Naive thymus-derived CD8-positive, alpha-beta T cell (primary cell): ENCODE measurements at regions of chr1 and their contacts with region 1.

Region 1: GRCh38 chr1:15578921-15579682 is 5.7 kb downstream of the AGMAT start:
- DNase-seq: peak; percentile 11 to 79 (median 48)
- ATAC-seq: peak; percentile 90 to 97
- H3K4me3 Mint-ChIP-seq: peak overlapping the region; percentile 60 to 82 (median 74)
- H3K27ac Mint-ChIP-seq: peak overlapping the region; percentile 95 to 98 (median 97)
- H3K4me1 Mint-ChIP-seq: peaks cover 20 to 61% (median 48%) of the 10 kb centered on the region in 4 donors
- H3K27me3 Mint-ChIP-seq: no peaks in the 10 kb centered on the region

Region 2: GRCh38 chr1:15475752-15476314 is 103.3 kb before region 1 on chr1 and contains the start of gene CELA2B:
- POLR2A ChIA-PET with region 1: no interaction called
- DNase-seq: no peak
- ATAC-seq: no peak
- H3K4me3 Mint-ChIP-seq: peak within 1 kb of the TSS in 1 of 10 donors; percentile 24
- H3K27ac Mint-ChIP-seq: no peak within 1 kb of the TSS
- H3K4me1 Mint-ChIP-seq: no peaks in the 10 kb centered on the region
- H3K27me3 Mint-ChIP-seq: no peaks in the 10 kb centered on the region
- polyA plus RNA-seq, gene CELA2B: not detected

Region 3: GRCh38 chr1:15526490-15527339 is 52.4 kb before region 1 on chr1 and contains the start of gene DNAJC16:
- POLR2A ChIA-PET with region 1: interaction called, 20 read pairs
- DNase-seq: peak; percentile 77 to 99 (median 96)
- ATAC-seq: peak; percentile 42 to 59
- H3K4me3 Mint-ChIP-seq: peak within 1 kb of the TSS; percentile 87 to 97 (median 92)
- H3K27ac Mint-ChIP-seq: peak within 1 kb of the TSS; percentile 89 to 100 (median 100)
- H3K4me1 Mint-ChIP-seq: peaks cover 32 to 63% (median 50%) of the 10 kb centered on the region in 4 donors
- H3K27me3 Mint-ChIP-seq: peaks cover 0 to 2% (median 0%) of the 10 kb centered on the region in 5 donors
- polyA plus RNA-seq, gene DNAJC16: 5.0 to 9.7 (median 7.1) TPM

Region 4: GRCh38 chr1:15603050-15603965 is 24.2 kb after region 1 on chr1:
- POLR2A ChIA-PET with region 1: interaction called, 25 read pairs
- DNase-seq: peak; percentile 84 to 97 (median 92)
- ATAC-seq: peak; percentile 98 to 99
- H3K4me3 Mint-ChIP-seq: peak overlapping the region; percentile 78 to 92 (median 84)
- H3K27ac Mint-ChIP-seq: peak overlapping the region; percentile 75 to 94 (median 90)
- H3K4me1 Mint-ChIP-seq: peaks cover 4 to 14% (median 11%) of the 10 kb centered on the region in 4 donors
- H3K27me3 Mint-ChIP-seq: no peaks in the 10 kb centered on the region

Region 5: DNA sequence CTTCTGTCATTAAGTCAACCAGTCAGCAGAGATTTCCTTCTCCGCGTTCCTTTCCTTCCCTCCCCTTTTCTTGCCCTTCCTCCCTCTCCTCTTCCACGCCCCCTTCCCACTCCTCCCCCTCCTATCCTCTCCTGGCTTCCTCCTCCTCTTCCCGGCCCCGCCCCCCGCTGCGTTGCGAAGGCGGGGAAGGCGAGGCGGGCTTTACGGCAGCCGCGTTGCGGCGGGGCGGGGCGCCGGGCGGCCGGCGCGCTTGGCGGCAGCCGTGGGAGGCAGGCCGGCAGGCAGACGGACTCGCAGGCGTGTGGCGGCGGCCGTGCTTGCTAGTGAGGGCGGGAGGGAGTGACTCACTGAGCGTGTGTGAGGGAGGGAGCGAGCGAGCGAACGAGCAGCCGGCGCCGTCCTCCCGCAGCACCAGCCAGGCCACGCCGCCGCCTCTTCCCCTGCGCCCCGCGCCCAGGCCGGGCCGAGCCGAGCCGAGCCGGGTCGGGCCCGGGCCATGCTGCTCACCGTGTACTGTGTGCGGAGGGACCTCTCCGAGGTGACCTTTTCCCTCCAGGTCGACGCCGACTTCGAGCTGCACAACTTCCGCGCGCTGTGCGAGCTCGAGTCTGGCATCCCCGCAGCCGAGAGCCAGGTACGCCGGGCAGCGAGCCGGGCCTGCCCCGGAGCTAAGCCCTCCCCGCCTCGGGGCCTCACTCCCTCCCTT is 38.2 kb after region 1 on chr1 and contains the start of gene DDI2:
- POLR2A ChIA-PET with region 1: interaction called, 37 read pairs
- DNase-seq: peak; percentile 85 to 96 (median 90)
- ATAC-seq: peak; percentile 91 to 94
- H3K4me3 Mint-ChIP-seq: peak within 1 kb of the TSS; percentile 85 to 96 (median 92)
- H3K27ac Mint-ChIP-seq: peak within 1 kb of the TSS; percentile 84 to 97 (median 95)
- H3K4me1 Mint-ChIP-seq: peaks cover 21 to 52% (median 45%) of the 10 kb centered on the region in 4 donors
- H3K27me3 Mint-ChIP-seq: no peaks in the 10 kb centered on the region
- polyA plus RNA-seq, gene DDI2: 4.5 to 6.1 (median 5.0) TPM